ENCODE measurements at regions of chr14 and their contacts with region 1.

Region 1: GRCh38 chr14:54329082-54329695 is 67.6 kb upstream of the CDKN3 start:
- H3K4me3 ChIP-seq: no peak overlapping the region
- H3K27ac ChIP-seq: no peak overlapping the region
- H3K4me1 ChIP-seq: peaks cover 6% of the 10 kb centered on the region
- CTCF ChIP-seq: 0 out of 2 replicates have a peak, but pooled peaks have one; percentile 47

Region 2: GRCh38 chr14:54194501-54194900 is 134.7 kb before region 1 on chr14:
- CTCF ChIA-PET with region 1: no interaction called
- POLR2A ChIA-PET with region 1: no interaction called
- H3K4me3 ChIP-seq: no peak overlapping the region
- H3K27ac ChIP-seq: no peak overlapping the region
- H3K4me1 ChIP-seq: 0 out of 2 replicates have a peak, but pooled peaks cover 2% of the 10 kb centered on the region
- CTCF ChIP-seq: no peak

Region 3: GRCh38 chr14:54312140-54312801 is 16.9 kb before region 1 on chr14:
- CTCF ChIA-PET with region 1: interaction called, 10 read pairs
- POLR2A ChIA-PET with region 1: no interaction called
- H3K4me3 ChIP-seq: no peak overlapping the region
- H3K27ac ChIP-seq: no peak overlapping the region
- H3K4me1 ChIP-seq: no peaks in the 10 kb centered on the region
- CTCF ChIP-seq: no peak

Measured in HEK293 (cell line).